BJ (cell line): ENCODE measurements at regions of chr13 and their contacts with region 1.

Region 1: GRCh38 chr13:20877902-20878301 is 24.6 kb downstream of the XPO4 start:
- DNase-seq: no peak
- H3K4me3 ChIP-seq: no peak overlapping the region
- H3K27me3 ChIP-seq: no peaks in the 10 kb centered on the region
- CTCF ChIP-seq: no peak

Region 2: DNA sequence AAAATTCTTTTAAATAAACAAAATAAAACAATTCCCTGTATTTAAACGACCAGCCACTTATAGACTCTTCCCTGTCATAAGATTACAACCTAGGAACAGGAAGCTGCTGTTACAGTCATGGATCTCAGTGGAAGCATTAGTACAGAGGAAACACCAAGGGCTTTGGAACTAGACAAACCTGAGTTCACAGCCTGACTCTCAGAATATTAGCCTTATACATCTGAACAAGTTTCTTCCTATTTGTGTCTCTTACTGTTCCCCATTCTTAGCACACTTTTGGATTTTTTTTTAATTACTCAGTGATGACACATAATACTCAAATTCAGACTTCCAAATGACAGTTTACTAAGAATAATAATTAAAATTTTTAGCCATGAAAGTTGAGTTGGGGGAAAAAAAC is 535.1 kb after region 1 on chr13:
- CTCF ChIA-PET with region 1: no interaction called
- POLR2A ChIA-PET with region 1: interaction called, 21 read pairs
- DNase-seq: no peak
- H3K4me3 ChIP-seq: no peak overlapping the region
- H3K27me3 ChIP-seq: no peaks in the 10 kb centered on the region
- CTCF ChIP-seq: no peak